AG04450 (cell line): ENCODE measurements at regions of chr22 and their contacts with region 1.

Region 1: DNA sequence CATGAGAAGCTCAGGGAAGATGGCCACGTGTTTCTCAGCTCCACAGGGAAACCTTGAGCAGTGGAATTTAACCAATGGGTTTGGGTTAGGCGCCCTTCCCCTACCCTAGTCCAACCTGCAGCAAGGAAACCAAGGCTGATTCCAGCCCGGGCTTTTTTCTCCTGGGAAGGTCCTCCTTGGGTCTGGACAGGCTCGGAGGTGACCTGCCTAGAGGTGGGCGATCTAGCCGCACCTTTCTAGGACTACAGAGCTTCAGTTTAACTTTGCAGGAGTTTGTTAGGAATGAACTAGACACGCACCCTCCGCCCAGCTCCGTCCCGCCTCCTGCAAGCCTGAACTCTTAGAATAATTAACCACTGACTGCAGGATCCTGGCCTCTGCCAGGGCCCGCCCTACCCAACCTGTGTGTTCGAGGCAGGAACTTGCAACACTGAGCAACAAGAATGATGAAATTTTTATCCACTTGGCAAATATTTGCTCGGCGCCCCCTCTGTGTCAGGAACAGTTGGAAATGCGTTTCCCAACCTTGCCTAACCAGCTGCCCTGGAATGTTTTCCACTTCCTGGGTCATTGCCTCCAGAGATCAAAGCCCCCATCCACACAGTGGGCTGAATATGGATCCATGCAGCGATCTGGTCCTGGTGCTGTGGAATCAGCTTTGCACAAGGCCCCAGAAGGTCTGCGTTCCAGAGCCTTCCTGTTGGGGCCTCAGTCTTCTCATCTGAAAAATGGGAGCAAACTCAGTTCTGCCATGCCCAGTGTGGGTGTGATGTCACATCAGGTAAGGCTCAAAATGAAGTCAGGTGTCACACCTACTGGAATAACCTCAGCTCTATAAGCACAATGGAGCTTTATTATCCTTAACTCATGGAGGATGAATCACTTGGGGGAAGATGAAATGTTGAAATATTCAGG is 13.3 kb downstream of the MPST start:
- DNase-seq: no peak
- H3K4me3 ChIP-seq: no peak overlapping the region
- H3K27ac ChIP-seq: no peak overlapping the region
- H3K27me3 ChIP-seq: peaks cover 6% of the 10 kb centered on the region
- CTCF ChIP-seq: no peak

Region 2: GRCh38 chr22:37019309-37020125 is 13.3 kb before region 1 on chr22 and contains the starts of genes MPST and TST:
- CTCF ChIA-PET with region 1: interaction called, 36 read pairs
- POLR2A ChIA-PET with region 1: interaction called, 4 read pairs
- DNase-seq: no peak
- H3K4me3 ChIP-seq: peak within 1 kb of the TSS; percentile 78
- H3K27ac ChIP-seq: peak within 1 kb of the TSS; percentile 57
- H3K27me3 ChIP-seq: no peaks in the 10 kb centered on the region
- CTCF ChIP-seq: no peak
- polyA plus RNA-seq, gene MPST: 33.3 and 42.8 TPM in 2 replicates
- polyA plus RNA-seq, gene TST: 26.3 and 36.7 TPM in 2 replicates

Region 3: GRCh38 chr22:37043828-37044538 is 11.2 kb after region 1 on chr22:
- CTCF ChIA-PET with region 1: interaction called, 11 read pairs
- POLR2A ChIA-PET with region 1: no interaction called
- DNase-seq: no peak
- H3K4me3 ChIP-seq: no peak overlapping the region
- H3K27ac ChIP-seq: no peak overlapping the region
- H3K27me3 ChIP-seq: no peaks in the 10 kb centered on the region
- CTCF ChIP-seq: peak; percentile 62

Region 4: GRCh38 chr22:37290737-37291136 is 257.9 kb after region 1 on chr22:
- CTCF ChIA-PET with region 1: no interaction called
- POLR2A ChIA-PET with region 1: no interaction called
- DNase-seq: peak; percentile 32
- H3K4me3 ChIP-seq: no peak overlapping the region
- H3K27ac ChIP-seq: peak overlapping the region; percentile 21
- H3K27me3 ChIP-seq: peaks cover 8% of the 10 kb centered on the region
- CTCF ChIP-seq: no peak